ENCODE measurements at regions of chr16 and their contacts with region 1.

Region 1: GRCh38 chr16:18969050-18969854 is 14.5 kb upstream of the TMC7 start:
- DNase-seq: no peak
- ATAC-seq: peak; percentile 98
- H3K4me3 ChIP-seq: peak overlapping the region; percentile 27 to 42
- H3K27ac ChIP-seq: no peak overlapping the region
- H3K4me1 ChIP-seq: peaks cover 4% of the 10 kb centered on the region; the same call in 1 of the 2 replicates
- H3K27me3 ChIP-seq: no peaks in the 10 kb centered on the region
- CTCF ChIP-seq: peak; percentile 99

Region 2: DNA sequence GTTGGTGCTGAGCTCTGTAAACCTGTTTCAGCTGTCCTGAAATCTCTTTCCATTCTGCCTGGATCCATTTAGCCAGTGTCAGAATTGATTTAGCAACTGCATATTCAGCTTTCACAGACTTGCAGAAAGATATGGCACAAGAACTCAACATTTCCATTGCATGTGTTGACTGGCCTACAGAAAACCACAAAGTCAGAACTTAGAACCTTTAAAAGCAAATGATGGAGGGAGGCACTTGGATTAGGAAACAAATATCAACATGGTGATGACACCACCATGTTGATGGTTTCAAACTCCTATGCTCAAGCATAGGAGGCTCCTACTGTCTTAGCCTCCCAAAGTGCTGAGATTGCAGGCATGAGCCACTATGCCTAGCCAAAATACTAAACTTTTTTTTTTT is 115.6 kb before region 1 on chr16:
- CTCF ChIA-PET with region 1: interaction called, 10 read pairs
- POLR2A ChIA-PET with region 1: no interaction called
- in situ Hi-C with region 1: no loop called
- intact Hi-C with region 1: no loop called
- DNase-seq: no peak
- ATAC-seq: no peak
- H3K4me3 ChIP-seq: no peak overlapping the region
- H3K27ac ChIP-seq: no peak overlapping the region
- H3K4me1 ChIP-seq: no peaks in the 10 kb centered on the region
- H3K27me3 ChIP-seq: no peaks in the 10 kb centered on the region
- CTCF ChIP-seq: no peak

Region 3: GRCh38 chr16:19020689-19021088 is 51.4 kb after region 1 on chr16:
- CTCF ChIA-PET with region 1: no interaction called
- POLR2A ChIA-PET with region 1: no interaction called
- in situ Hi-C with region 1: no loop called
- intact Hi-C with region 1: no loop called
- DNase-seq: no peak
- ATAC-seq: no peak
- H3K4me3 ChIP-seq: no peak overlapping the region
- H3K27ac ChIP-seq: no peak overlapping the region
- H3K4me1 ChIP-seq: no peaks in the 10 kb centered on the region
- H3K27me3 ChIP-seq: no peaks in the 10 kb centered on the region
- CTCF ChIP-seq: no peak